Esophagus squamous epithelium (tissue), 5 donors: ENCODE measurements at regions of chr19 and their contacts with region 1.

Region 1: GRCh38 chr19:49817964-49818648 is at the start of gene MED25:
- DNase-seq: peak; percentile 42
- H3K4me3 ChIP-seq: peak within 1 kb of the TSS; percentile 63 to 84 (median 70)
- H3K27ac ChIP-seq: peak within 1 kb of the TSS; percentile 91 to 97 (median 94)
- H3K4me1 ChIP-seq: peaks cover 10 to 46% (median 16%) of the 10 kb centered on the region in 3 donors
- H3K27me3 ChIP-seq: no peaks in the 10 kb centered on the region
- CTCF ChIP-seq: peak in 5 of 6 experiments; percentile 33 to 65 (median 55)
- POLR2A ChIP-seq: peak in 3 of 4 donors; percentile 40 to 86 (median 59)
- total RNA-seq, gene MED25: 16.9 to 27.7 (median 23.9) TPM

Region 2: DNA sequence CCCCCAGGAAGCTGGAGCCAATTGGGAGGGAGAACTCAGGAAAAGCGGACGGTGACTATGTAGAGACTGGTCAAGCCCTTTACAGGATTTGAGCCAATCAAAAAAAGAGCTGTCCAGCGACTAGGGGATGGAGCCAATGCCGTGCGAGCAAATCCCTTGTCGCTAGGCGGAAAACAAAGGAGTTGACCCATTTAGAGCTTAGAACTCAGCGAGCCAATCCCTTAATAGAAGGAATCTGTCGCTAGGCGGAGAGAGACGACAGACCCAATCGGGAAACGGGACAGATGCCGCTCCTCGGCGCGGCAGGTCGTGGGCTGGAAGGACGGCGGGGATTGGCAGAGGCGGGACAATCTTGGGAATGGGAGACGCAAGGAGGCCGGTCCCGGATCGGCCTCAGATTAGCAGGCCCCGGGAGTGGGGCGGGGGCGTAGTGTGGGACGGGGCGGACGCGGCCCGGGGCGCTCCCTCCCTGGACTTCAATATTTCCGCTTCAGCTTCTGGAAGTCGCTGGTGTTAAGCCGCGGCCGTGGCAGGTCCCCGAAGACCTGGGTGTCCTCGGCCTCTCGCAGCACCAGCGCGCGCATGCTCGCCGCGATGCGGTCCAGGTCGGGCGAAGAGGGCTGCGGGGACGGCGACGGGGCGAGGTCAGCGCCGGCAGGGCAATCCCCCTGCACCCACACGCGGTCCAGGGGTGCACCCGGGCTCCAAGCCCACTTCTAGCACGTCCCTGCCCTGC is 51.5 kb after region 1 on chr19:
- intact Hi-C with region 1: loop called (anchors 10 kb)
- DNase-seq: peak; percentile 76
- H3K4me3 ChIP-seq: peak overlapping the region; percentile 47 to 74 (median 60)
- H3K27ac ChIP-seq: peak overlapping the region; percentile 91 to 97 (median 94)
- H3K4me1 ChIP-seq: peaks cover 28 to 79% (median 45%) of the 10 kb centered on the region in 3 donors
- H3K27me3 ChIP-seq: no peaks in the 10 kb centered on the region
- CTCF ChIP-seq: peak in 3 of 6 experiments; percentile 4 to 26 (median 12)
- POLR2A ChIP-seq: peak in 3 of 4 donors; percentile 30 to 89 (median 33)